ENCODE measurements at regions of chr4 and their contacts with region 1.

Region 1: GRCh38 chr4:71113294-71113693 is 119.8 kb downstream of the DCK start:
- DNase-seq: no peak
- ATAC-seq: no peak
- H3K4me3 ChIP-seq: no peak overlapping the region
- H3K27ac ChIP-seq: no peak overlapping the region
- H3K4me1 ChIP-seq: no peaks in the 10 kb centered on the region
- H3K27me3 ChIP-seq: no peaks in the 10 kb centered on the region
- CTCF ChIP-seq: 0 out of 2 replicates have a peak, but pooled peaks have one; percentile 3
- POLR2A ChIP-seq: no peak
- RAD21 ChIP-seq: no peak

Region 2: DNA sequence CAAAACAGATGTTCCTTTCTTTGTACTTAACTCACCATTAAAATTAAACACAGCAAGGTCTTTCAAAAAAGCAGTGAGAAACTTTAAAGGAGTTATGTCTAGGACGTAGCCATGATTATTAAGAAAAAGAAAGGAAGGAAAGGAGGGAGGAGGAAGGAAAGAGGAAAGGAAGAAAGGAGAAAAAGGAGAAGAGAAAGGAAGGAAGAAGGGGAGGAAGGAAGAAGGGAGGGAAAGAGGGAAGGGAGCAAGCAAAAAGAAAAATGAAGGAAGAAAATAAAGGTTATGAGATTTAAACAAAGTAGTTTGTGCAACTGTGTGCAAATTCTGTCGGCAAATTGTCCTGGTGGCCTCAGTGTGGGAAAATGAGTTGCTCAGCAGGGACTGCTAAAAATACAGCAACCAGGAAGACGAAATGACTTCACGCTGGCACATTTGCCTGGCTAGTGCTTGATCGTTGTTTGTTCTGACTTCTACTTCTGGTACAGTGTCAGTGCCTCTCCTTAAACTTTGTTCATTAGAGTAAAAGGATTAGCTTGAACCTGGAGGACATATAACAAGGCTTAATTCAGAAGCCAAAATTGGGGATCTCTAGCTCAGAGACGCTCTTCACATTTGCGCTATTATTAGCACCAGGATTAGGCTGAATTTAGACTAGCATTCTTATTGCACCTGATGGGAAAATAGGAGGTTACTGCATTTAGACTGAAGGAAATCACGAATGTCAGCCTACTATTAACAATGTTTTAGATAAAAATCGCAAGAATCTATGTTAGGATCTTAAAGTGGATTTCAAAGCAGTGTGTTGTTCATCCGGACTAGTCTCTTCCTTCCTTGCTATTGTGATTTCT is 38.6 kb before region 1 on chr4:
- CTCF ChIA-PET with region 1: no interaction called
- POLR2A ChIA-PET with region 1: no interaction called
- dilution Hi-C with region 1: no loop called
- in situ Hi-C with region 1: loop called (anchors 5 kb)
- intact Hi-C with region 1: no loop called
- DNase-seq: no peak
- ATAC-seq: no peak
- H3K4me3 ChIP-seq: no peak overlapping the region
- H3K27ac ChIP-seq: no peak overlapping the region
- H3K4me1 ChIP-seq: no peaks in the 10 kb centered on the region
- H3K27me3 ChIP-seq: no peaks in the 10 kb centered on the region
- CTCF ChIP-seq: no peak
- POLR2A ChIP-seq: no peak
- RAD21 ChIP-seq: no peak

Measured in IMR-90 (cell line).